Body of pancreas (tissue), 4 donors: ENCODE measurements at regions of chr17 and their contacts with region 1.

Region 1: DNA sequence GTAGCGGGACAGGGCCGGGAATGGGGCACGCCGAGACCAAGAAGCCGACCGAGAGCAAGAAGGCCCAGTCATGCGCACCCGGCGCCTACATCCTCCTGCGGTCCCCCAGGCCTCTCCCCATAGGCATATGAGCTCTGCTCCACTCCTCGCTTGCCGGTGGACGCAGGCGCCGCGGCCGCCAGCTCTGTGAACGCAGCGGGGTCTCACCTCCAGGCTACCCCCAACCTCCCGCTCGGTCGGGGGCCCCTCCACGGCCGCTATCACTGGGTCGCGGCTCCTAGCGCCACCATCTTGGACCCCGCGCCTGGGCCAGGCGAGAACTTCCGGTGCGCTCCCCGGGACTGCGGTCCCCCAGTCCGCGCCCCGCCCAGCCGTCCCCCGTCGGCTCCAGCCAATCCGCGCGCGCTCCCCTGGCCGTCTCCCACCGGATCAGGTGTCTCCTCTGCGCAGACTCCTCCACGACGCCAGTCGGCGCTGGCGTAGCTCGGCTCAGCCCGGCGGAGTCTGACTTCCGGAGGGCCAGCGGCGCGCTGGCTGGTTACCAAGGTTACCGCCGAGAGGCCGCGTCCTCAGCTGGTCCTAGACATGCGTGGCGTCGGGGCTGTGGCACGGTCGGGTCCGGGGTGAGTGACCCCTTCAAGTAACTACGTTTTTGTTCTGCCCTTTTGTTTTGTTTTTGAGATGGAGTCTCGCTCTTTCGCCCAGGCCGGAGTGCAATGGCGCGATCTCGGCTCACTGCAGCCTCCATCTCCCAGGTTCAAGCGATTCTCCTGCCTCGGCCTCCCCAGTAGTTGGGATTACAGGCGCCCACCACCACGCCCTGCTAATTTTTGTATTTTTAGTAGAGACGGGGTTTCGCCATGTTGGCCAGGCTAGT is at the start of gene ZNF594:
- DNase-seq: peak; percentile 95 to 97 (median 96)
- ATAC-seq: peak; percentile 100
- H3K4me3 ChIP-seq: peak within 1 kb of the TSS; percentile 31 to 80
- H3K27ac ChIP-seq: peak within 1 kb of the TSS; percentile 21 to 70 (median 56)
- H3K4me1 ChIP-seq: peaks cover 20% of the 10 kb centered on the region
- H3K27me3 ChIP-seq: no peaks in the 10 kb centered on the region
- CTCF ChIP-seq: peak; percentile 51 to 93 (median 86)
- POLR2A ChIP-seq: peak; percentile 50 to 81 (median 77)
- total RNA-seq, gene ZNF594: 4.4 to 6.9 TPM

Region 2: DNA sequence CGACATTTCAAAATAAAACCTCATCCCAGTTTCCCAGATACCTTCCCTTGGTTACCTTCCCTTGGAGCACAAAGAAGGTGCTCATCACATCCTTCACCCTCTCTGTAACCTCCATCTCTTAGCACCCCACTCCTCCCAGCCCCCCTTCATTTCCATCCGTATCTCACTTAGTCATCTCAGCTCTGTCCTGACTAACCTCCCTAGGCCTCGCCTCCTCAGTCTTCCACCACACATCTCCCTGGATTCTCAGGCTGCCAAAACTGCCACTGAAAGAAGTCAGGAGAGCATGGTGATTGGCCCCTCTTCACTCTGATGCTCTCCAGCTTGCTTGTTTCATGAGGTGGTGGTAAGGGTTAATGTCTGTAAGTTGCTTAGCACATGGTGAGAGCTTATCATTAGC is 111.2 kb before region 1 on chr17:
- intact Hi-C with region 1: loop called (anchors 10 kb)
- DNase-seq: no peak
- ATAC-seq: no peak
- H3K4me3 ChIP-seq: no peak overlapping the region
- H3K27ac ChIP-seq: no peak overlapping the region
- H3K4me1 ChIP-seq: peaks cover 23% of the 10 kb centered on the region
- H3K27me3 ChIP-seq: no peaks in the 10 kb centered on the region
- CTCF ChIP-seq: no peak
- POLR2A ChIP-seq: no peak

Region 3: DNA sequence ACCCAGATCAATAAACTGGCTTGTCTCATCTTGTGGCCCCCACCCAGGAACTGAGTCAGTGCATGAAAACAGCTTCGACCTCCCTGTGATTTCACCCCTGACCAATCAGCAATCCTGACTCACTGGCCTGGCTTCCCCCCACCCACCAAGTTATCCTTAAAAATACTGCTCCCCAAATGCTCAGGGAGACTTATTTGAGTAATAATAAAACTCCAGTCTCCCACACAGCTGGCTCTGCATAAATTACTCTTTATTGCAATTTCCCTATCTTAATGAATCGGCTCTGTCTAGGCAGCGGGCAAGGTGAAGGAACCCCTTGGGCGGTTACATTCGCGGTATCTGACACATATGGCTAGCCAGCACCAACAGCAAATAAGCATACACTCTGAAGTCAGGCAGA is 80.5 kb after region 1 on chr17:
- intact Hi-C with region 1: no loop called
- DNase-seq: no peak
- ATAC-seq: no peak
- H3K4me3 ChIP-seq: no peak overlapping the region
- H3K27ac ChIP-seq: no peak overlapping the region
- H3K4me1 ChIP-seq: peaks cover 7% of the 10 kb centered on the region
- H3K27me3 ChIP-seq: no peaks in the 10 kb centered on the region
- CTCF ChIP-seq: no peak
- POLR2A ChIP-seq: no peak